AG04450 (cell line): ENCODE measurements at regions of chr5 and their contacts with region 1.

Region 1: DNA sequence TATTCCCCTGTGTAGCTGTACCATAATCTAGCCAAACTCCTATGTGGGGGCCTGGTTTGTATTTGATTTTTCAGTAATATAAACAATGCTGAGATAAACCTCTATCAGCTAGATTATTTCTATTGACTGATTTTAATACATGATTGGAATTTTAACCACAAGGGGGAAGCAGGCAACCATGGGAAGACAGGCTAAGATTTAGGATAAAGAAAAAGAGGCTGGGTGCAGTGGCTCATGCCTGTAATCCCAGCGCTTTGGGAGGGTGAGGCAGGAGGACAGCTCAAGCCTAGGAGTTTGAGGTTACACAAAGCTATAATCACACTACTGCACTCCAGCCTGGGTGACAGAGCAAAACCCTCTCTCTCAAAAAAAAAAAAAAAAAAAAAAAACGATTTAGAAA is 18.1 kb upstream of the GPX3 start:
- DNase-seq: no peak
- H3K4me3 ChIP-seq: no peak overlapping the region
- H3K27ac ChIP-seq: no peak overlapping the region
- H3K27me3 ChIP-seq: peaks cover 9% of the 10 kb centered on the region
- CTCF ChIP-seq: peak; percentile 59

Region 2: GRCh38 chr5:151037561-151038411 is 35.5 kb after region 1 on chr5:
- CTCF ChIA-PET with region 1: interaction called, 19 read pairs
- POLR2A ChIA-PET with region 1: no interaction called
- DNase-seq: peak; percentile 26
- H3K4me3 ChIP-seq: no peak overlapping the region
- H3K27ac ChIP-seq: peak overlapping the region; percentile 67
- H3K27me3 ChIP-seq: no peaks in the 10 kb centered on the region
- CTCF ChIP-seq: no peak

Region 3: DNA sequence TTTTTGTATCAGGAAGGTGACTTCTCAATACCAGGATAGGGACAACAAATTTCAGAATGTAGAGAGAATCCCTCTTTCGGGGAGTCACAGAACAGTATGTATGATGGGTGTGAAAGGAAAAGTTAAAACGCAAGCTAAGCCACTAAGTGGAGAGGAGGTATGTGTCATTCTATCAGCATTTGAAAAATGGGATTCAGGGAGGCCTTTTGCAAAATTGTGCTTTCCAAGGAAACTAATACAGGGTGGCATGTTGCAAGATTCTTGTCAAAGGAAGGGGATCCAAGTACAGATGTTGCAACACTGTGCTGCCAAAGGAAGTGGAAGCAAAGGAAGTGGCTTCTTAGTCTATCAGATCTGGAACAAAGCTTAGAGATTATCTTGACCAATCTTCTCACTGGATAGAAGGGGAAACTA is 91.2 kb after region 1 on chr5:
- CTCF ChIA-PET with region 1: interaction called, 12 read pairs
- POLR2A ChIA-PET with region 1: no interaction called
- DNase-seq: no peak
- H3K4me3 ChIP-seq: no peak overlapping the region
- H3K27ac ChIP-seq: peak overlapping the region; percentile 89
- H3K27me3 ChIP-seq: no peaks in the 10 kb centered on the region
- CTCF ChIP-seq: no peak

Region 4: DNA sequence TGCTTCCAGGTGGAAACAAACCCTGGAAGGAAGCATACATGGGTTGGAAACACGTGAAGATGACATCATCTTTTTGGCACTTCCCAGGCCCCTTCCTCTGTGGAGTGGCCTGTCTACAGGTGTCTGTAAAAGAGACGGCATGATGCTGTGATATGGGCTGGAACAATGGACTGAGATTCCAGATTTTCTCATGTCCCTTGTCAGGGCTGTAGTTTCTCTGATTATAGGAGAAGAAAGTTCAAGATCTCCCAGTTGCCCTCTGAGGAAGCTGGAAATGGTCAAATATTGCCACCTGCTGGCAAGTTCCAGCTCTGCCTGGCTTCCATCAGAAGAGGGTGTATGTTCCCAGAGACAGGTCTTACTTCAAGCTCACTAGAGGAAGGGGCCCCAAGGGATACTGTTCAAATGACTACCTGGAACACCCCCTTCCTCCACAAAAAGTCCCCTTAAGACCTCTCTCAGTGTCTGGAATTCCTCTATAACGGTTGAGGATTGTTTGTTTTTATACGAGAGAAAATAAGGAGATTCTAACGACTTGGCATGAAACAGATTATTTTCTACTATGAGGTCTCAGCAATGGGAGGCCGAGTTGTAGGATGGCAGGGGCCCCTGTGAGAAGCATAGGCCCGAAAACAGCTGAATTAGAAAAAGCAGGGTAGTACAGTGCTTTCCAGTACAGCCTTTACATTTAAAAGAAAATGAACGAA is 162.6 kb after region 1 on chr5:
- CTCF ChIA-PET with region 1: interaction called, 131 read pairs
- POLR2A ChIA-PET with region 1: no interaction called
- DNase-seq: peak; percentile 56
- H3K4me3 ChIP-seq: no peak overlapping the region
- H3K27ac ChIP-seq: no peak overlapping the region
- H3K27me3 ChIP-seq: peaks cover 2% of the 10 kb centered on the region
- CTCF ChIP-seq: peak; percentile 93

Region 5: DNA sequence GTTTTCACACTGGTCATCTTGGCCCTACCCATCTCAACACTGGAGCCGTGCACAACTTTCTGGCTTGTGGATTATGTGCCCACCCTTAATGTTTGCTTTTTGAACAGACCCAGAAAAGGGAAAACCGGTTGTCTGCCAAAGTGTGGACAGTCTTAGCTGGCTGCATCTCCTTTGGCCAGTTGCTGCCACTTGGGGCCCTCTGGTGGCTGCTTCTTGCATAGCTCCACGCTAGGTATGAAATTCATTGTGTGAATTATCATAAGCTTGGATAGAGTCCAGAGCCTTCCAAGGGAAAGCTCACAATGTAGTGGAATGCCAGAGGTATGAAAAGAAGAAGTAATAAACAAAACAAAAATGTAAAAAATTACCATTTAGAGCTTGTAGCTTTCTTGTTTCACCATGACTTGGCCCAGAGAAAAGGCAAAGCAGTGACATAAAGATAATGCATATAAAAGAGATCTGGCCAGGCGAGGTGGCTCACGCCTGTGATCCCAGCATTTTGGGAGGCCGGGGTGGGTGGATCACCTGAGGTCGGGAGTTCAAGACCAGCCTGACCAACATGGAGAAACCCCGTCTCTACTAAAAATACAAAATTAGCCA is 313.8 kb after region 1 on chr5:
- CTCF ChIA-PET with region 1: interaction called, 14 read pairs
- POLR2A ChIA-PET with region 1: no interaction called
- DNase-seq: peak; percentile 26
- H3K4me3 ChIP-seq: no peak overlapping the region
- H3K27ac ChIP-seq: no peak overlapping the region
- H3K27me3 ChIP-seq: no peaks in the 10 kb centered on the region
- CTCF ChIP-seq: peak; percentile 95